ENCODE measurements at regions of chr10 and their contacts with region 1.

Region 1: GRCh38 chr10:91908337-91909116 is 759 bp downstream of the FGFBP3 start:
- DNase-seq: peak; percentile 56 to 83 (median 76)
- H3K4me3 ChIP-seq: peak overlapping the region; percentile 56 to 94 (median 80)
- H3K27ac ChIP-seq: peak overlapping the region in 55 of 59 donors; percentile 3 to 88 (median 68)
- H3K27me3 ChIP-seq: no peaks in the 10 kb centered on the region
- CTCF ChIP-seq: peak in 53 of 56 donors; percentile 29 to 68 (median 50)

Region 2: DNA sequence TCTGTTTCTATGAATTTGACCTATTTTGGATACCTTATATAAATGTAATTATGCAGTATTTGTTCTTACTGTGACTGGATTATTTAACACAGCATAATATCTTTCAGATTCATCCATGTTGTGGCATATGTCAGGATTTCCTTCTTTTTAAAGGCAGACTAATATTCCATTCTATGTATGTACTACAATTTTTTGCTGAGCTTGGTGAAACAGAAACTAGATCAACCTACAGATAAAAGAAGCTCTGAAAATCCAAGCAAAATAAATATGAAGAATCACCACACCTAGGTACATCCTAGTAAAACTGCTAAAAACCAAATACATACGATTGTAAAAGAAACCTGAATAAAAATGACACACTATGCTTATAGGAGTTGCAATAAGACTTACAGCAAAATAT is 1351.1 kb before region 1 on chr10:
- intact Hi-C with region 1: no loop called
- DNase-seq: no peak
- H3K4me3 ChIP-seq: no peak overlapping the region
- H3K27ac ChIP-seq: no peak overlapping the region
- H3K27me3 ChIP-seq: no peaks in the 10 kb centered on the region
- CTCF ChIP-seq: no peak

Region 3: GRCh38 chr10:91298224-91298871 is 610.2 kb before region 1 on chr10:
- intact Hi-C with region 1: loop called in 1 of 2 experiments (anchors 10 kb)
- DNase-seq: peak; percentile 59 to 84 (median 70)
- H3K4me3 ChIP-seq: peak overlapping the region; percentile 29 to 77 (median 57)
- H3K27ac ChIP-seq: peak overlapping the region in 56 of 59 donors; percentile 1 to 88 (median 70)
- H3K27me3 ChIP-seq: no peaks in the 10 kb centered on the region
- CTCF ChIP-seq: peak; percentile 72 to 97 (median 94)

Region 4: GRCh38 chr10:91389636-91390512 is 518.7 kb before region 1 on chr10:
- intact Hi-C with region 1: loop called in 1 of 2 experiments (anchors 5 kb)
- DNase-seq: no peak
- H3K4me3 ChIP-seq: peak overlapping the region in 24 of 59 donors; percentile 3 to 49 (median 21)
- H3K27ac ChIP-seq: no peak overlapping the region
- H3K27me3 ChIP-seq: no peaks in the 10 kb centered on the region
- CTCF ChIP-seq: peak; percentile 52 to 86 (median 72)

Region 5: DNA sequence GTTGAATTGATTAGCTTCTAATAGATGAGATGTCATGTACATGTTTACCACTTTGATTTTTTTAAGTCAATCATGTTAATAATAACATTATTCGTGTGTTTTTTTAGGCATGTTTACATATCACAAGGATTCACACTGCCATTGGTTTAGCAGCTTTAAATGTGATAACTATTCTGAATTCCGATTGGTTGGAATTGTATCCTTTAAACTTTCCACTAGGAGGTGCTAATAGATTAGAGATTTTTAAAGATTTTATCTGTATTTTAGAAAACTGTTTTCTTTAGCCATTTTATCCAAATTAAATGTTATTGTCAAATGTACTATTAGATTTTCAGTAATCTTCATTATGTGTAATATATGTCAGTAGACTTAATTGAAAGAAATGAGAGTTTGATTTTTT is 415.2 kb before region 1 on chr10:
- intact Hi-C with region 1: loop called in 1 of 2 experiments (anchors 10 kb)
- DNase-seq: no peak
- H3K4me3 ChIP-seq: no peak overlapping the region
- H3K27ac ChIP-seq: no peak overlapping the region
- H3K27me3 ChIP-seq: no peaks in the 10 kb centered on the region
- CTCF ChIP-seq: peak in 55 of 56 donors; percentile 17 to 82 (median 61)

Region 6: DNA sequence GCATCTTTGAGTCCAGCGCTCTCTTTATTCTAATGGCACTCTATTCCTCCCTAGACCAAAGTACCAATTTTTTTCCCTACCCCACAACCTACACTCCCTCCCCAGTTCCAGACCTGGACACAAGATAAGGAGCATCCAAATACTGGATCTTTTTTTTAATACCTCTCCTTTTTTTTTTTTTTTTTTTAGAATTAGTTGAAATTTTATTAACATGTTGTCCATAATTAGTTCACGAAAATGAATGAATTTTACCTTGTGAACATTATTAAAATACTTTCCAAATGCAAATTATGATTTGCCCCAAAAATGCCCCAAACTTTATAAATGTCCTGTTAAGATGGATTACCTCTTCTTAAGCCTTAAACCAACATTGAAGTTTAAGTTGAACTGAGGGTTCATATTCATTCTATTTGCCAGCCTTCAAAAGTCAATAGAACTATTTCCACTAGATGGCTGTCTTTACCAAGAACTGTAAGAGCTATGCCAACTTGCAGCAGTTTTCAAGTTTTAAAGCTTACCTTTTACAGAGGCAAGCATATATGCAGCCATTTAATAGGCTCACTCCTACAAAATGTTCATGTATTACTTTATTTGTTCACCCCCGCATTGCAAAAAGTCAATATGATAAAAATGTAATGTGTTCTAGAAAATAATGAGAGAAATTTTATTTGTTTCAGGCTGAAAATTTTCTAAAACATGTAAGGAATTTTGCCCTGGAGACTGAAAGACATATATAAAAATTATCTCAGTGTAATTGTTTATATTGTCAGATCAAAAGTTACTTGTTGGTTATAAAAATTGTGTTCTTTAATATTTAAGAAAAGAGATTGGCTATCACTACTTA is 150.0 kb before region 1 on chr10:
- intact Hi-C with region 1: loop called (anchors 2 to 5 kb)
- DNase-seq: no peak
- H3K4me3 ChIP-seq: no peak overlapping the region
- H3K27ac ChIP-seq: no peak overlapping the region
- H3K27me3 ChIP-seq: no peaks in the 10 kb centered on the region
- CTCF ChIP-seq: peak in 55 of 56 donors; percentile 27 to 83 (median 60)

Region 7: GRCh38 chr10:91797874-91798648 is 110.5 kb before region 1 on chr10 and contains the start of gene TNKS2:
- intact Hi-C with region 1: loop called (anchors 5 kb)
- DNase-seq: peak; percentile 77 to 94 (median 87)
- H3K4me3 ChIP-seq: peak within 1 kb of the TSS; percentile 50 to 99 (median 92)
- H3K27ac ChIP-seq: peak within 1 kb of the TSS; percentile 52 to 99 (median 91)
- H3K27me3 ChIP-seq: no peaks in the 10 kb centered on the region
- CTCF ChIP-seq: peak in 38 of 56 donors; percentile 9 to 66 (median 30)
- total RNA-seq, gene TNKS2: 35.0 to 51.5 (median 43.0) TPM

Region 8: GRCh38 chr10:91923371-91924211 is 15.1 kb after region 1 on chr10 and contains the start of gene BTAF1:
- intact Hi-C with region 1: loop called in 1 of 2 experiments (anchors 2 kb)
- DNase-seq: peak; percentile 89 to 97 (median 94)
- H3K4me3 ChIP-seq: peak within 1 kb of the TSS; percentile 39 to 100 (median 91)
- H3K27ac ChIP-seq: peak within 1 kb of the TSS; percentile 56 to 99 (median 93)
- H3K27me3 ChIP-seq: no peaks in the 10 kb centered on the region
- CTCF ChIP-seq: peak in 33 of 56 donors; percentile 13 to 55 (median 31)
- total RNA-seq, gene BTAF1: 28.2 to 65.3 (median 40.9) TPM

Measured in dorsolateral prefrontal cortex (tissue), 120 donors.